AG04450 (cell line): ENCODE measurements at regions of chr16 and their contacts with region 1.

Region 1: DNA sequence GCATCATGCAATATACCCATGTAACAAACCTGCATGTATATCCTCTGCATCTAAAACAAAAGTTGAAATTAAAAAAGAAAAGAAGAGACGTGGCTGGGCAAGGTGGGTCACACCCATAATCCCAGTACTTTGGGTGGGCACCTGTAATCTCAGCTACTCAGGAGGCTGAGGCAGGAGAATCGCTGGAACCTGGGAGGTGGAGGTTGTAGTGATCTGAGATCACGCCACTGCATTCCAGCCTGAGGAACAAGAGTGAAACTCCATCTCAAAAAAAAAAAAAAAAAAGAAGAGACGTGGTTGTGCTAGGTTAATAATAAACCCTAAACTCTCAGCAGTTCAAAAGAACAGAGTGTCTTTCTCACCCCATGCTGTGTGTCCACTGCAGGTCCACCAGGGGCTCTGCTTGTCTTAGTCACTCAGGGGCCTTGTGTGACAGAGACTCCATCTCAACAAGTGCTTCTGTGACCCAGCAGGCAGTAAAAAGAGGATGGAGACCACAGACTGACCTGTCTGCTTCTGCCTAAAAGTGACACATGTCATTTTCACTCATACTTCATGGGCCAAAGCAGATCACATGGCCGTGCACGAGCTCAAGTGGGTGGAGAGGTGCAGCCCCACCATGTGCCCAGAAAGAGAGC is 22.3 kb upstream of the N4BP1 start:
- DNase-seq: no peak
- H3K4me3 ChIP-seq: no peak overlapping the region
- H3K27ac ChIP-seq: no peak overlapping the region
- H3K27me3 ChIP-seq: peaks cover 3% of the 10 kb centered on the region
- CTCF ChIP-seq: no peak

Region 2: DNA sequence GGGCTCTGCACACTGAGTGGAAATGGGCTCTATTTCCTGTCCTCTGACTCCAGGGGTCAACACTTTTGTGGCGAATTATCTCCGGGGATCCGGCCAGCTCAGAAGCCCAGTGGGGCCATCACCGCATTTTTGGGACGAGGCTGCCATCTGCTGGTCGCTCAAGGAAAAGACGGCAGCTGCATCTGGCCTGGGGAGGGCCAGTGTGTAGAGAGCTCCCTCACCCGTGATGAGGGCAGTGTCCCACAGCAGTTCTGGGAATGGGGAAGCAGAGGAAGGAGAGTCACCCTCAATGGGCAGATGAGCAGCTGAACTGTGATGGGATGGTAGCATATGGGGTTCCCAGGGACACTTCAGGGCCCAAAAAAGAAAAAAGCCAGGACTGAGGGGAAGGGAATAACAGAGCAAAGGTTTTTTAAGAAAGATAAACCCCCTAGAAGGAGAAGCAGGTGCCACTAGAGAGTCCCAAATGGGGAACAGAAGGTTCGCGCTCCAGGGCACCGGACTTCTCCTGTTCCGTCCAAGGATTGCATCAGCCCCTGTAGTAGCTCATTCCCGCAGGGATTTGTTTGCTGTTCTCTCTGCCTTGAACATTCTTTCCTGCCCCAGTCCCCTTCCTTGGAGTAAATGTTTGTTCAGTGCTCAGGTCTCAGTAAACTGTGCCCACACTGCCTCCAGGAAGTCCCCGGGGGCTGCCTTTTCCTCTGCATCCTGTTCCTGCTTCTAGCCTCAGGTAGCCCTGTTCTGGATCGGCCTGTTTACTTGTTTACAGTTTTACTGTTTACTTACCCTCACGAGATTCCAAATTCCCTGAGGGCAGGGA is 467.1 kb before region 1 on chr16:
- CTCF ChIA-PET with region 1: interaction called, 30 read pairs
- POLR2A ChIA-PET with region 1: no interaction called
- DNase-seq: peak; percentile 13
- H3K4me3 ChIP-seq: no peak overlapping the region
- H3K27ac ChIP-seq: no peak overlapping the region
- H3K27me3 ChIP-seq: no peaks in the 10 kb centered on the region
- CTCF ChIP-seq: peak; percentile 85

Region 3: DNA sequence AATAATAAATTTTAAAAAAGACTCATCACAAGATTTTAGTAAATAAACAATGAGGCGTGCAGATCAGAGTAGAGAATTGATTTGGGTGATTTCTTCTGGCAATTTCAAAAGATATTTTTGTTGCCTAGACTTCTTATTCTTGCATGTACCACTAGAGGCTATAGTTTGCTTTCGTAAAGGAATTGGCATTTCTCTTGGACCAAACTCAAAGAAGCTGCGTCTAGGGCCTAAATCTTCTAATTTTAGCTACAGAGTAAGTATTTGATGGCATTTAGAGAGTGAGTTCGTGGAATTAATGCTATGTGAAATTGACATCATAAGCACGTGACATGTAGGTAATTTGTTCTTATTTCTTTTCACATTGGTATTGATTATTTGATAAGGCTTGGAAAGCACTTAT is 360.5 kb before region 1 on chr16:
- CTCF ChIA-PET with region 1: interaction called, 17 read pairs
- POLR2A ChIA-PET with region 1: no interaction called
- DNase-seq: no peak
- H3K4me3 ChIP-seq: no peak overlapping the region
- H3K27ac ChIP-seq: no peak overlapping the region
- H3K27me3 ChIP-seq: no peaks in the 10 kb centered on the region
- CTCF ChIP-seq: peak; percentile 51

Region 4: DNA sequence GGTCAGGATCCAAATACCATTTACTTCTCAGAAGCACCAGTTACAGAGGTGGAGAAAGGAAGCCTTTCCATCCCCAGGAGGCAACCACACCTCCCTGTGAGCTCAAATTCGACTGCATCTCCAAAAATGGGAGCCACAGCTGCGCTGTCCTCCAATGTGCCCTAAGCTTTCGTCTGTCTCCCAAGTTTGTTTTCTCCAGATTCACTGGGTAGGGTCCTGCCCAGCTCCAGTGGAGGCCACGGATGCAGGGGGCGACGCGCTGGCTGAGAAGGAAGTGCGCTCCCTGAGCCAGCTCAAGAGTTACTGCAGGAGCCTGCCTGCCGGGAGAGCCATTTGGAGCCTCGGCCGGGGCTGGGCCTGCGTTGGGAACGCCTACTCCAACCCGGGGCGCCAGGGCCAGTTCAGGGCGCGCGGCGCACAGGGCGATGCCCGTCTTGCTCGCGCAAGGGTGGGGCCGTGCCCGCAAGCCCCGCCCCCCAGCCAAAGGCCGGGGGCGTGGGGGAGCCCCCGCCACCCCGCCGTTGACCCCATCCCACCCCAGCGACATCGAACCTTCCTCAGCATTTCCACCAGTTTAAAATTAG is 266.6 kb before region 1 on chr16:
- CTCF ChIA-PET with region 1: interaction called, 21 read pairs
- POLR2A ChIA-PET with region 1: no interaction called
- DNase-seq: no peak
- H3K4me3 ChIP-seq: peak overlapping the region; percentile 63
- H3K27ac ChIP-seq: peak overlapping the region; percentile 95
- H3K27me3 ChIP-seq: no peaks in the 10 kb centered on the region
- CTCF ChIP-seq: peak; percentile 17; the same call in 1 of the 2 replicates

Region 5: GRCh38 chr16:48617711-48618148 is 14.5 kb before region 1 on chr16:
- CTCF ChIA-PET with region 1: interaction called, 20 read pairs
- POLR2A ChIA-PET with region 1: no interaction called
- DNase-seq: no peak
- H3K4me3 ChIP-seq: no peak overlapping the region
- H3K27ac ChIP-seq: no peak overlapping the region
- H3K27me3 ChIP-seq: no peaks in the 10 kb centered on the region
- CTCF ChIP-seq: no peak